ENCODE measurements at regions of chr9 and their contacts with region 1.

Region 1: DNA sequence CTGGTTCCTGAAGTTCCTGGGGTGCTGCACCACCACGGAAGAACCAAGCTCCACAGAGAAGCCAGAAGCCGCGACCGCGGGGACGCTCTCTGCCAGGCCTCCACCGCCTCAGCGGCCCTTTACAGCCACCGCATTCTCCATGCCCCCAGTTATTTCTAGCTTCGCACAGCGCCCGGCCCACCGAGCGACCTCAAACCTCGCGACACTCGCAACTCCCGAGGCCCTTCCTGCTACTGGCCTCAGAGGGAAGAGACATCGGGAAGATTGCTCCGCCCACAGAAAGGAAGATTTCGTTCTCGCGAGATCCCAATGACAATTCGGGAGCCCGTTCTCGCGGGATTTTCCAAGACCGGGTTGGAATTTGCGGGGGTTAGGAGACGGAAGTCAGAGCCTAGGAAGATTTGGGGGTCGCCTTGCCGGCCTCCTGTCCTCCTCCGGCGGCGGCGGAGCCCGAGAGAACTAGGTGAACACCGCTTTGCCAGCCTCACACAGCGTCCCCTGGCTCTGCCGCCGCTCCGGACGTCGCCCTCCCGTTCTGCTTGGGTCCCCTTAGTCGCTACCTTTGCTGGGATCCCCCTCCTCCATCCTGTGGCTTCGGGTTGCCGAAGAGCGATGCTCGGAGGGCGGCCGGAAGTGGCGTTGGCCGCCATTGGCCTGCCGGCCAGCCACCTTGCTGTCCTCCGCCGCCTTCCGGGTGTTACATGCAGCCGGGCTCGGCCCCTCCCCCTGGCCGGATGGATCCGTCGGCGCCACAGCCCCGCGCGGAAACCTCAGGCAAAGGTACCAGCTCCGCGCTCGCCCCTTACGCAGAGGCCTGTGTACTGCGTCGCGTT is at the start of gene ERCC6L2:
- DNase-seq: peak; percentile 97
- H3K4me3 Mint-ChIP-seq: no peak within 1 kb of the TSS
- H3K27ac Mint-ChIP-seq: no peak within 1 kb of the TSS
- H3K4me1 Mint-ChIP-seq: peaks cover 28% of the 10 kb centered on the region
- H3K27me3 Mint-ChIP-seq: no peaks in the 10 kb centered on the region
- total RNA-seq, gene ERCC6L2: 23.1 to 25.1 TPM

Region 2: GRCh38 chr9:95127249-95128176 is 748.0 kb before region 1 on chr9:
- CTCF ChIA-PET with region 1: no interaction called
- POLR2A ChIA-PET with region 1: no interaction called
- intact Hi-C with region 1: no loop called
- DNase-seq: peak; percentile 84
- H3K4me3 Mint-ChIP-seq: no peak overlapping the region
- H3K27ac Mint-ChIP-seq: no peak overlapping the region
- H3K4me1 Mint-ChIP-seq: no peaks in the 10 kb centered on the region
- H3K27me3 Mint-ChIP-seq: no peaks in the 10 kb centered on the region

Region 3: DNA sequence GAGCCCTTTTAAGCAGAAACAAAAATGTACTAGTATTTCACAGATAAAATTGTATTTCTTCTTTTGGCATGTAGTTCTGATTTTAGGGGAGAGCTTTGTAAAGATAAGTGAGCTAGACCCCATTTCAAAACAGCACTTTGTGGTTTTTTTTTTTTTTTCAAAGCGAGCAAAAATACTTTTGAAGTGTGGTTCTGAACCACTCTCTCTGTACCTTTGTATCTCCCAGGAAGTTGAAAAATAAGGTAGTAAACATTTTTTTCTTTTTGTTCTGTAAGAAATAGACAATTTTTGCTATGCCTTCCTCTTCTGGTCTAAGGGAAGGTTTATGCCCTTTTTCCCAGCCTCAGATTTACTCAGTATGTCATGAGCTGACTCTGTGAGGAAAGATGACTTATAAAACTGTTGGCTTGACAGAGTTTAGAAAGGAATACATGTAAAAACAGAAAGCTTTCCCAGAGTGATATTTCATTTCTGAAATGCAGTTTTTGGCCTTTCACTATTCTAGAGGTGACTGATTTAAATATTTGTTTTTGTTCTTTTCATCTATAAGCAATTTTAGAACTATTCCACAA is 12.5 kb after region 1 on chr9:
- CTCF ChIA-PET with region 1: interaction called, 7 read pairs
- POLR2A ChIA-PET with region 1: interaction called, 11 read pairs
- intact Hi-C with region 1: no loop called
- DNase-seq: no peak
- H3K4me3 Mint-ChIP-seq: no peak overlapping the region
- H3K27ac Mint-ChIP-seq: peak overlapping the region; percentile 50
- H3K4me1 Mint-ChIP-seq: peaks cover 57% of the 10 kb centered on the region
- H3K27me3 Mint-ChIP-seq: no peaks in the 10 kb centered on the region

Region 4: GRCh38 chr9:96061293-96061987 is 185.9 kb after region 1 on chr9:
- CTCF ChIA-PET with region 1: no interaction called
- POLR2A ChIA-PET with region 1: no interaction called
- intact Hi-C with region 1: loop called (anchors 5 kb)
- DNase-seq: peak; percentile 57
- H3K4me3 Mint-ChIP-seq: no peak overlapping the region
- H3K27ac Mint-ChIP-seq: no peak overlapping the region
- H3K4me1 Mint-ChIP-seq: peaks cover 16% of the 10 kb centered on the region
- H3K27me3 Mint-ChIP-seq: no peaks in the 10 kb centered on the region

Region 5: GRCh38 chr9:96270236-96270744 is 394.8 kb after region 1 on chr9:
- CTCF ChIA-PET with region 1: no interaction called
- POLR2A ChIA-PET with region 1: no interaction called
- intact Hi-C with region 1: no loop called
- DNase-seq: no peak
- H3K4me3 Mint-ChIP-seq: no peak overlapping the region
- H3K27ac Mint-ChIP-seq: no peak overlapping the region
- H3K4me1 Mint-ChIP-seq: no peaks in the 10 kb centered on the region
- H3K27me3 Mint-ChIP-seq: no peaks in the 10 kb centered on the region